ENCODE measurements at regions of chr1 and their contacts with region 1.

Region 1: DNA sequence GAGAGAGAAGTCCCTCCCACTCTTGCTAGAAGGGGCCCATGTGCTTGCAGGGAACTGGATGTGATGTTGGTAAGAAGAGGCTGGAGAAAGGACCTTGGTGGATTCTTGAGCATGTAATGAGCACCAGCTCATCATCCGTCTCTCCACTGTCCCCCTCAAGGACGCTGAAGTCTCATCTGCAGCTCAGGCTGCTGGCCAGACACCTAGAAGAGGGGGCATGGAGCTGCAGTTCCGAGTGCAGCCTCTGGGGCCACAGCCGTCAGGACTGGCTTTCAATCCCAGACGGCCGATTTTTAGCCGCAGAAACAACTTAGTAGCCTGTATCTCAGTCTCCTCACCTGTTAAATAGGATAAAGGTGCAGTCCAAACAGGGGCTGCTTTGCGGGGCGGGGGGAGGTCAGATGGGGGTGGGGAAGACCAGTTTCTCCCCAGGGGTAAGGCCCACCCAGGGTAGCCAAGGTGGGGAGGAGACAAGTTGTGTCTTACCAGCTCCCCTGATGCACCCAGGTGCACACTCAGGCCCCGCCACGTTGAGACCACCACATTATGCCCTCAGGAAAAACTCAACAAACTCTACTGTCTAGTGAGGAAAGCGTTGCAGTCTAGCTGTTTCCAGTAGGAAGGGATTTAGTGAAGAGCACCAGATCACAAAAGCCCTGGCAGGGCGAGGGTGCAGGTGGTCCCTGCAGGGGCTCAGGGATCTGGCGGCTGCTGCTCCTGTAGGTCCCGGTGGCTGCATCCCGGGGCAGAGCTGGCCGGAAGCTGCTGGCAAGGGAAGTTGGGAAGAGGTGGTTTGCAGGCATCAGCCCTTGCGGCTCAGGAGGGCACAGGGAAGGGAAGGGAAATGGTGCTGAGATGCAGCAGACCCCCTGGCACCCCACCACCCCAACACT is 29.5 kb downstream of the LDLRAP1 start:
- DNase-seq: peak; percentile 80
- ATAC-seq: peak; percentile 73
- H3K4me3 Mint-ChIP-seq: no peak overlapping the region
- H3K27ac Mint-ChIP-seq: no peak overlapping the region
- H3K4me1 Mint-ChIP-seq: peaks cover 49% of the 10 kb centered on the region
- H3K27me3 Mint-ChIP-seq: no peaks in the 10 kb centered on the region; the same call in 1 of the 2 replicates
- CTCF ChIP-seq: peak; percentile 75

Region 2: GRCh38 chr1:25425098-25426085 is 147.6 kb before region 1 on chr1:
- CTCF ChIA-PET with region 1: no interaction called
- POLR2A ChIA-PET with region 1: no interaction called
- DNase-seq: no peak
- ATAC-seq: no peak
- H3K4me3 Mint-ChIP-seq: no peak overlapping the region
- H3K27ac Mint-ChIP-seq: no peak overlapping the region
- H3K4me1 Mint-ChIP-seq: peaks cover 3% of the 10 kb centered on the region
- H3K27me3 Mint-ChIP-seq: peaks cover 28% of the 10 kb centered on the region
- CTCF ChIP-seq: no peak

Region 3: GRCh38 chr1:25538191-25538761 is 34.7 kb before region 1 on chr1:
- CTCF ChIA-PET with region 1: interaction called, 17 read pairs
- POLR2A ChIA-PET with region 1: no interaction called
- DNase-seq: no peak
- ATAC-seq: no peak
- H3K4me3 Mint-ChIP-seq: no peak overlapping the region
- H3K27ac Mint-ChIP-seq: no peak overlapping the region
- H3K4me1 Mint-ChIP-seq: peaks cover 12% of the 10 kb centered on the region
- H3K27me3 Mint-ChIP-seq: peaks cover 6% of the 10 kb centered on the region; the same call in 1 of the 2 replicates
- CTCF ChIP-seq: no peak

Region 4: DNA sequence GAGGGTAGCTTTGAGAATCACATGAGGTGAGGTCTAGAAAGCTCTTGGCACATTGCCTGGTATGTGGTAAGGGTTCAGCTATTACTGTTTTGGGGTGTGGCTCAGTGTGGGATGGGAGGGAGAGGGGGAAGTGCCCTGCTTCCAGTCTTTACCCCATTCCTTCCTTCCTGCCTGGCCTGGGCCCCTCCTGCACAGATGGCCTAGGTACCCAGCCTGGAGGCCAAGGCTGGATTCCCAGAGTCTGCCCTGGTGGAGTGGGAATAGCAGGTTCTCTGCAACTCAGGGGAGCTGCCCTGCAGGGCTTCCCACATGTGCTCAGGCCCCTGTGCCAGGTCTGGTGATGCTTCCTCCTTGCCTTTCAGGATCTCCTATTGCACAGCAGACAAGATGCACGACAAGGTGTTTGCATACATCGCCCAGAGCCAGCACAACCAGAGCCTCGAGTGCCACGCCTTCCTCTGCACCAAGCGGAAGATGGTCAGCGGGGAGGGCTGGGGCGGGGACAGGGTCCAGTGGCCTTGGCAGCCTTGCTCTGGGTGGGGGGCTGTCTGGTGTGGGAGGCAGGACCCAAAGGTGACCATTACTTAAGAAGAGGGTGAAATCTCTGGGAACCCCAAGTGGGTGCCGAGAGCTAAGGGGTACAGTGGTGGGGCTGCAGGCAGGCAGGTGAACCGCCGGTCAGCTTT is 16.0 kb before region 1 on chr1:
- CTCF ChIA-PET with region 1: interaction called, 11 read pairs
- POLR2A ChIA-PET with region 1: no interaction called
- DNase-seq: no peak
- ATAC-seq: no peak
- H3K4me3 Mint-ChIP-seq: no peak overlapping the region
- H3K27ac Mint-ChIP-seq: no peak overlapping the region
- H3K4me1 Mint-ChIP-seq: no peaks in the 10 kb centered on the region
- H3K27me3 Mint-ChIP-seq: no peaks in the 10 kb centered on the region
- CTCF ChIP-seq: no peak

Region 5: DNA sequence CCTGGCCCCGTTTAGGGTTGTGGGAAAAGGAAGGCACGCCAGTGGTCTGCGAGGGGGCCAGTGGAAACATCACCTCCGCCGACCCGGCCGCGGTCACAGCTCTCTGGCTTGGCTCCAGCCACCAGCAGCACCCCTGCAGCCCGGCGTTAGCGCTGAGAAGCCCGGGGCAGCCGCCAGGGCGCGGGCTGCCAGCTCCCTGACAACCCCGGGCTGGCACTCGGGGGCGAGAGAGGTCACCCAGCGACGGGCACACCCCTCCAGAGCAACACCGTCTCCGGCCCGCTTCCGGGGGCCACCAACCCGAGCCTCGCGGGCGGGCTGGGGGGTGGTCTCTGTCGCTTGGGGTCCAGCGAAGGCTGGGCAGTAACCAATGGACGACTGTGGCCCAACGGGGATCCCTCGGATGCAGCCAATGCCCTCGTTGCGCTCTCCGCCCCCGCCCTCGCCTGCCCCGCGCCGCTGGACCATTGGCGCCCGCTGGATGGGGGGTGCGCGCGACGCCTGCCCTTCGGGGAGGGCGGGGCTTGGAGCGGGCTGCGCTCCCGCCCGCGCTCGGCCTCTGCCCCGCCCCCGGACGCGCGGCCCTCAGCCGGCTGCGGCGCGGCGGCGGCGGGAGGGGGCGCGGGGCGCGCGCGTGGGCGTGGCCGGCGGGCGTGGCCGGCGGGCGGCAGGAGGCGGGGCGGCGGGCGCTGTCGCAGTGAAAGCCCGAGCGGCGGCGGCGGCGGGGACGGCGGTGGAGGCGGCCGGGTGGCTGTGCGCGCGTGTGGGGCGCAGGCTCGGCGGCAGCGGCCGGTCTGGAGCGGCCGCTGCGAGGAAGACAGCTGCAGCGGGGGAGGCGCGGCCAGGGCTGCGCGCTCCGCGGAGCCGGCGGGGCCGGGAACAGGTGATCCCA is 43.4 kb after region 1 on chr1 and contains the start of gene MAN1C1:
- CTCF ChIA-PET with region 1: interaction called, 31 read pairs
- POLR2A ChIA-PET with region 1: no interaction called
- DNase-seq: peak; percentile 95
- ATAC-seq: peak; percentile 92
- H3K4me3 Mint-ChIP-seq: peak within 1 kb of the TSS; percentile 76
- H3K27ac Mint-ChIP-seq: no peak within 1 kb of the TSS
- H3K4me1 Mint-ChIP-seq: peaks cover 28% of the 10 kb centered on the region
- H3K27me3 Mint-ChIP-seq: peaks cover 44% of the 10 kb centered on the region
- CTCF ChIP-seq: no peak
- total RNA-seq, gene MAN1C1: 10.4 to 16.8 TPM (median 12.2 TPM) in 3 replicates

Region 6: DNA sequence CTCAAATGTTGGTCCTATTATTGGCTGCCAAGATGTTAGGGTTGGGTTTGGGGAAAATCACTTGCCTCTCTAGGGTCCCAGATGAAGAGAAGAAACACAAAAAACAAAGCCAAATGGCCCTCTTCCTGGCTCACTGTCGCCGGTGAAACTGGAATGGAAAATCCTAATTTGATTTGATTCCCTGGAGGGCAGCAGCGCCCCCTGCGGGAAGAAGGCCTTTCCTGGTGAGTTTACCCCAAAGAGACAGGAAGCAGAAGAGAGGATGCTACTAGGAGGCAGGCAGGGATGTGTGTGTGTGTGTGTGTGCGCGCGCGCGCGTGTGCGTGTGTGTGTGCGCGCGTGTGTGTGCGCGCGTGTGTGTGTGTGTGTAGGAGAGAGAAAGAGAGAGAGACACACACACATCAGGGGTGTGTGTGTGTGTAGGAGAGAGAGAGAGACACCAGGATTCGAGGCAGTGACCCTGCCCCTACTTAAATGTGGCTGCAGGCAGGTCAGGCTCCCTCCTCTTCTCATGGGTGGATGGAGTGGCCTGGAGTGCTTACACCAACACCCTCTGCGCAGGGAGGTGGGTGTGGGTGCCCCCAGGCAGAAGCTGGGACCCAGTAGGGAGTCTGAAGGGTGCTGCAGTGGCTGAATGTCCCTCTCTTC is 224.0 kb after region 1 on chr1:
- CTCF ChIA-PET with region 1: interaction called, 22 read pairs
- POLR2A ChIA-PET with region 1: no interaction called
- DNase-seq: peak; percentile 95
- ATAC-seq: peak; percentile 27
- H3K4me3 Mint-ChIP-seq: no peak overlapping the region; the same call in 1 of the 2 replicates
- H3K27ac Mint-ChIP-seq: peak overlapping the region; percentile 29; the same call in 1 of the 2 replicates
- H3K4me1 Mint-ChIP-seq: peaks cover 30% of the 10 kb centered on the region
- H3K27me3 Mint-ChIP-seq: peaks cover 4% of the 10 kb centered on the region
- CTCF ChIP-seq: peak; percentile 77